Calu3 (cell line): ENCODE measurements at regions of chr5 and their contacts with region 1.

Region 1: GRCh38 chr5:132238169-132238744 is 10.6 kb upstream of the P4HA2 start:
- DNase-seq: peak; percentile 92
- H3K4me3 Mint-ChIP-seq: no peak overlapping the region
- H3K27ac Mint-ChIP-seq: no peak overlapping the region
- H3K4me1 Mint-ChIP-seq: no peaks in the 10 kb centered on the region
- H3K27me3 Mint-ChIP-seq: no peaks in the 10 kb centered on the region
- CTCF ChIP-seq: peak; percentile 93

Region 2: GRCh38 chr5:132227485-132228240 is 10.6 kb before region 1 on chr5 and contains the start of gene P4HA2:
- CTCF ChIA-PET with region 1: interaction called, 12 read pairs
- intact Hi-C with region 1: no loop called
- DNase-seq: peak; percentile 92
- H3K4me3 Mint-ChIP-seq: peak within 1 kb of the TSS; percentile 76
- H3K27ac Mint-ChIP-seq: no peak within 1 kb of the TSS
- H3K4me1 Mint-ChIP-seq: peaks cover 25% of the 10 kb centered on the region
- H3K27me3 Mint-ChIP-seq: peaks cover 18% of the 10 kb centered on the region
- CTCF ChIP-seq: no peak
- total RNA-seq, gene P4HA2: 45.1 and 51.8 TPM in 2 replicates

Region 3: GRCh38 chr5:132260714-132261551 is 22.7 kb after region 1 on chr5:
- CTCF ChIA-PET with region 1: interaction called, 21 read pairs
- intact Hi-C with region 1: no loop called
- DNase-seq: peak; percentile 81
- H3K4me3 Mint-ChIP-seq: peak overlapping the region; percentile 42
- H3K27ac Mint-ChIP-seq: peak overlapping the region; percentile 61
- H3K4me1 Mint-ChIP-seq: peaks cover 49% of the 10 kb centered on the region
- H3K27me3 Mint-ChIP-seq: no peaks in the 10 kb centered on the region
- CTCF ChIP-seq: no peak

Region 4: DNA sequence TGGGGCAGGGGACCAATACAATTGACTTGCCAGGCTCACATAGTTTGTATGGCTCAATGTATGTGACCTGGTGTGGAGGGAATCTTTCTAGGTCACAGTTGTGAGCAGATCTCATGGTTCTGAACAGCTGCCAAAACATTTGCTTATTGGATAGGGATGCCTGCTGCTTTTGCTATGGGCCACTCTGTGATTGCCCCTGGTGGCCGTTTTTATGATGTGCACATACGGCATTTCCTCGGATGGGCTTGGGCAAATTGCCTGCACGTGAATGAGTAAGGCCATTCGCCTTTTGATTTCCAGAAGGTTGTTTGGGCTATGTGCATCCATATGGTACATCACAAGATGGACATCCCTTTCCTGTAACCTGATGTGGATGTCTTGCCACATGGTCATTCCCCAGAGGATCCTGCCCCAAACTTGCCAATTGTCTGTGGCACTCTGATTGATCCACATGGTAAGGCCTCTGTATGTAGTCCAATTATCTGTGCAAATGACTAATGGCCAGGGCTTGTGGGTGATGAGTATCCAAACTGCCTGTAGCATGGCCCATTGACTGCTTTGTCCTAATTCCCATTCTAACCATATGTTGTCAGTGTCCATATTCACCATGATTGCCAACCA is 45.3 kb after region 1 on chr5:
- CTCF ChIA-PET with region 1: interaction called, 5 read pairs
- intact Hi-C with region 1: loop called (anchors 1 kb)
- DNase-seq: peak; percentile 64
- H3K4me3 Mint-ChIP-seq: no peak overlapping the region
- H3K27ac Mint-ChIP-seq: no peak overlapping the region
- H3K4me1 Mint-ChIP-seq: no peaks in the 10 kb centered on the region
- H3K27me3 Mint-ChIP-seq: peaks cover 15% of the 10 kb centered on the region
- CTCF ChIP-seq: peak; percentile 69

Region 5: DNA sequence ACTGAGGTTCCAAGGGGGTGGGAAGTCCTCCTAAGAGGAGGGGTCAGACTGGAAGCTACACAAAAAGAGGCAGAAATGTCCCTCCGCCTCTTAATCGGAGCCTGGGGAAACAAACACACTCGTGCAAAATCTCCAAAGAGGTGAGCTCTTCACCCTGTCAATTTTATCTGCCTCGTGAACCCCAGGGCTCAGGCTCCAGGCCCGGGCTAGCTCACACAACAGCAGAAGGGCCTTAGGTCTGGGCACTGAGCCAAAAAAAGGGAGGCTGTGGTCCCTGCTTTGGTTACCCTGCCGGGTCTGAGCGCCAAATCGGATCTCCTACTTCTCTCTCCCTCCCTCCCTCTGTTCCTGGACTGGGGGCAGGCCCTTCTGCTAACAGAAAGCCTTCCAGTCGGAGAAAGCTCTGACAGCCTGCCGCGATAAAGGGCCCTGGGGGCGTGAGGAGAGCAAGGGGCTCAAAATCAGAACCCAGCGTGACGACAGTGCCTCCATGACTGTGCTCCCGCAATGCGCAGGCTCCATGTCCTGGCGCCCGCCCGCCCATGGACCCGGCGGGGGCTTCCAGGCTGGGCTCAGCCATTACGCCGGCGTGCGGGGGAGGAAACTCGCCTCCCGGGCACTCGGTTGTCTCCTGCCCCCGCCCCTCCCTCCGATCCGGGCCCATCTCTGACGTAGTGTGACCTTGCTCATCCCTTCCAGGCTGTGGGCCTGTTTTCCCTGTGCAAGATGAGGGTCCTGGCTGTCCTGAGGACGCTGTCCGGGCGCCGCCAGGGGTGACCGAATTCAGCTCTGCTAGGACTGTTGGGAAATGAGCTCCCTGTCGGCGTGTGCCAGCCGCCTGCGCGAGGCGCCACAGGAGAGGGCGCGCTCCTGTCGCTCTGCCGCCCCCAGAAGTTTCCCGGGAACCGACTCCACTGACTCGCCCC is 55.1 kb after region 1 on chr5:
- CTCF ChIA-PET with region 1: interaction called, 26 read pairs
- intact Hi-C with region 1: no loop called
- DNase-seq: peak; percentile 73
- H3K4me3 Mint-ChIP-seq: peak overlapping the region; percentile 88
- H3K27ac Mint-ChIP-seq: peak overlapping the region; percentile 90
- H3K4me1 Mint-ChIP-seq: peaks cover 26% of the 10 kb centered on the region
- H3K27me3 Mint-ChIP-seq: no peaks in the 10 kb centered on the region
- CTCF ChIP-seq: peak; percentile 29